Dorsolateral prefrontal cortex (tissue), 120 donors: ENCODE measurements at regions of chr13 and their contacts with region 1.

Region 1: GRCh38 chr13:58907347-58907746 is 1256.4 kb downstream of the DIAPH3 start:
- DNase-seq: no peak
- H3K4me3 ChIP-seq: no peak overlapping the region
- H3K27ac ChIP-seq: no peak overlapping the region
- H3K27me3 ChIP-seq: peaks cover 0 to 3% (median 0%) of the 10 kb centered on the region in 45 donors
- CTCF ChIP-seq: peak in 23 of 56 donors; percentile 7 to 53 (median 21)

Region 2: GRCh38 chr13:58792854-58793253 is 114.5 kb before region 1 on chr13:
- intact Hi-C with region 1: no loop called
- DNase-seq: no peak
- H3K4me3 ChIP-seq: no peak overlapping the region
- H3K27ac ChIP-seq: no peak overlapping the region
- H3K27me3 ChIP-seq: no peaks in the 10 kb centered on the region
- CTCF ChIP-seq: no peak

Region 3: GRCh38 chr13:59261928-59262488 is 354.7 kb after region 1 on chr13:
- intact Hi-C with region 1: loop called in 1 of 2 experiments (anchors 5 kb)
- DNase-seq: no peak
- H3K4me3 ChIP-seq: no peak overlapping the region
- H3K27ac ChIP-seq: no peak overlapping the region
- H3K27me3 ChIP-seq: no peaks in the 10 kb centered on the region
- CTCF ChIP-seq: peak in 53 of 56 donors; percentile 31 to 72 (median 52)